WTC11 (cell line): ENCODE measurements at regions of chr12 and their contacts with region 1.

Region 1: DNA sequence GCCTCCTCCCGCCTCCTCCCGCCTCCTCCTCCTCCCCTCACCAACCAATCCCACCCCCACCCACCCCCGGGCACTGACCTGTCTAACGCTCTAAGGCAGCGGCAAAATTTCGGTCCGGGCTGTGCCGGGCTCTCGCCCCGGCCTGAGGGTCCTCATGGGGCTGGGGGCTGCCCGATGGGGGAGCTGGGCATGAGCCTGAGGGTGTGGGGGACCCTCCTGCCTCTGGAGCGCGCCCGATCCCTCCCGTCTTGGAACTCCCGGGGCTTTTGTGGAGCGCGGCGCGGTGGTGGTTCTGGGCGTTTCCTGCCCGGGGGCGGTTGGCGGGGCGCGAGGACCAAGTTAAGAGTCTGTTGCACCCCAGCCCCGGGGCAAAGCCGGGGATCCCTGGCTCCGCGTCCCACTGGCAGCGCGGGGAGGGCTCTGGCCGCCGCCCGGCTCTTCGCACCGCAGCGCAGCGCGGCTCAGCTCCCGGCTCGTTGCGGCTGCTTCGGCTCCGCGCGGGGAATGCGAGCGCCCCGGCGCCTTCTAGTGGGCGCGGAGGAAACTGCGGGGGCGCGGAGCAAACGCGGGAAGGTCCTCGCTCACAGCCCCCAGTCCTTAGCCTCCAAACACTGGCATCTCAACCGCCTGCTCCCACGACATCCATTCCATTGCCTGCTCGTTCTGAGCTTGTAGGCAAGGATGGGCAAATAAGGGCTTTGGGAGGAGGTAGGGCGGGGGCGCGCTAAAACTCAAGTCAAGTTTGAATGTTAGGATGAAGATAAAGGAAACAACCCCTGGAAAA is at the start of gene B4GALNT1:
- DNase-seq: peak; percentile 77
- ATAC-seq: peak; percentile 85
- H3K4me3 Mint-ChIP-seq: peak within 1 kb of the TSS; percentile 74
- H3K27ac Mint-ChIP-seq: no peak within 1 kb of the TSS
- H3K4me1 Mint-ChIP-seq: peaks cover 15% of the 10 kb centered on the region
- H3K27me3 Mint-ChIP-seq: peaks cover 80% of the 10 kb centered on the region
- CTCF ChIP-seq: peak; percentile 73
- total RNA-seq, gene B4GALNT1: 0.46 to 1.2 TPM (median 1.2 TPM) in 3 replicates

Region 2: GRCh38 chr12:57332646-57333312 is 300.1 kb before region 1 on chr12:
- CTCF ChIA-PET with region 1: no interaction called
- POLR2A ChIA-PET with region 1: no interaction called
- DNase-seq: no peak
- ATAC-seq: no peak
- H3K4me3 Mint-ChIP-seq: no peak overlapping the region
- H3K27ac Mint-ChIP-seq: peak overlapping the region; percentile 48; the same call in 1 of the 2 replicates
- H3K4me1 Mint-ChIP-seq: no peaks in the 10 kb centered on the region
- H3K27me3 Mint-ChIP-seq: no peaks in the 10 kb centered on the region
- CTCF ChIP-seq: no peak

Region 3: GRCh38 chr12:57563358-57563757 is 69.5 kb before region 1 on chr12:
- CTCF ChIA-PET with region 1: no interaction called
- POLR2A ChIA-PET with region 1: no interaction called
- DNase-seq: no peak
- ATAC-seq: no peak
- H3K4me3 Mint-ChIP-seq: no peak overlapping the region
- H3K27ac Mint-ChIP-seq: no peak overlapping the region
- H3K4me1 Mint-ChIP-seq: no peaks in the 10 kb centered on the region
- H3K27me3 Mint-ChIP-seq: no peaks in the 10 kb centered on the region
- CTCF ChIP-seq: no peak

Region 4: DNA sequence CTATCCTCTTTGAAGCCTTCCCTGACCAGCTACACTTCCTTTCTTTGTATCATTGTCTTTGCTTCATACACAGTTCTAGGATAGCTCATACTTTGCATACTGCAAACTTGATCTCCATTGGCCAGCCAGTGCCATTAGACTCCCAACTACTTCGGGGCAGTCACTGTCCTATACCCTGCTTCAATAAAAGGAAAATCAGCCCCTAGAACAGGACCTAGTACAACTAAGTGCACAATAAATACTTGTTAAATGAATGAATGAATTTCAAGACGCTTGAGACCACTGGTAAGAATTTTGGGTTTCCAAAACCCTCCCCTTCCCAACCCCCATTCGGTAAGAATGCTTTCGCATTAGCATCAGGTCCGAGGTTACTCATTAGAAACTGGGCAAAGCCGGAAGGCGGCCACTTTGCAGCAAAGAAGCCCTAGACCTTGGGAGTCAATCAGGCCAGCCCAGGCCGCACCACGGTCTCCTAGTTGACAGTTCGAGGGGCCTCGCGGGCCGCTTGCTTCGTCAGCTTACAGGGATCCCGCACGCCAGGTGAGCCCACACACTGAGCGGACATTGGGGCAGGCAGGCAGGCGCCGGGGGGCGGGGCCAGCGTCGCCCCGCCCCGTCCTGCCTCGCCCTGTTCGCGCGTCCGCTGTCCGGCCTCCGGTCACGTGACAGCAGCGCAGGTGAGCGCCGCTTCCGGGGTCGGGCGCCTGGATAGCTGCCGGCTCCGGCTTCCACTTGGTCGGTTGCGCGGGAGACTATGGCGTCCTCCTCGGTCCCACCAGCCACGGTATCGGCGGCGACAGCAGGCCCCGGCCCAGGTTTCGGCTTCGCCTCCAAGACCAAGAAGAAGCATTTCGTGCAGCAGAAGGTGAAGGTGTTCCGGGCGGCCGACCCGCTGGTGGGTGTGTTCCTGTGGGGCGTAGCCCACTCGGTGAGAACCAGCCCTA is 42.1 kb before region 1 on chr12 and contains the start of gene PIP4K2C:
- CTCF ChIA-PET with region 1: interaction called, 29 read pairs
- POLR2A ChIA-PET with region 1: no interaction called
- DNase-seq: peak; percentile 91
- ATAC-seq: peak; percentile 98
- H3K4me3 Mint-ChIP-seq: peak within 1 kb of the TSS; percentile 89
- H3K27ac Mint-ChIP-seq: peak within 1 kb of the TSS; percentile 72
- H3K4me1 Mint-ChIP-seq: peaks cover 14% of the 10 kb centered on the region
- H3K27me3 Mint-ChIP-seq: peaks cover 3% of the 10 kb centered on the region; the same call in 1 of the 2 replicates
- CTCF ChIP-seq: no peak
- total RNA-seq, gene PIP4K2C: 25.4 to 26.9 TPM (median 25.8 TPM) in 3 replicates

Region 5: GRCh38 chr12:57611108-57611809 is 21.6 kb before region 1 on chr12 and contains the start of gene ARHGEF25:
- CTCF ChIA-PET with region 1: interaction called, 15 read pairs
- POLR2A ChIA-PET with region 1: no interaction called
- DNase-seq: peak; percentile 73
- ATAC-seq: peak; percentile 67
- H3K4me3 Mint-ChIP-seq: peak within 1 kb of the TSS; percentile 87
- H3K27ac Mint-ChIP-seq: no peak within 1 kb of the TSS
- H3K4me1 Mint-ChIP-seq: peaks cover 36% of the 10 kb centered on the region
- H3K27me3 Mint-ChIP-seq: peaks cover 53% of the 10 kb centered on the region
- CTCF ChIP-seq: no peak
- total RNA-seq, gene ARHGEF25: 11.9 to 19.0 TPM (median 17.2 TPM) in 3 replicates

Region 6: GRCh38 chr12:57693659-57694458 is 61.0 kb after region 1 on chr12 and contains the start of gene OS9:
- CTCF ChIA-PET with region 1: interaction called, 15 read pairs
- POLR2A ChIA-PET with region 1: no interaction called
- DNase-seq: peak; percentile 93
- ATAC-seq: peak; percentile 98
- H3K4me3 Mint-ChIP-seq: no peak within 1 kb of the TSS
- H3K27ac Mint-ChIP-seq: no peak within 1 kb of the TSS
- H3K4me1 Mint-ChIP-seq: no peaks in the 10 kb centered on the region
- H3K27me3 Mint-ChIP-seq: peaks cover 26% of the 10 kb centered on the region
- CTCF ChIP-seq: 0 out of 2 replicates have a peak, but pooled peaks have one; percentile 39
- total RNA-seq, gene OS9: 77.5 to 93.9 TPM (median 93.1 TPM) in 3 replicates